K562 (cell line): ENCODE measurements at regions of chr10 and their contacts with region 1.

Region 1: GRCh38 chr10:72625608-72626443 is at the start of gene MICU1:
- DNase-seq: peak; percentile 99
- ATAC-seq: peak; percentile 98
- H3K4me3 ChIP-seq: peak within 1 kb of the TSS; percentile 87
- H3K27ac ChIP-seq: peak within 1 kb of the TSS; percentile 80
- H3K4me1 ChIP-seq: peaks cover 6 to 18% of the 10 kb centered on the region in 2 experiments; a peak in 3 of 5 replicates
- H3K27me3 ChIP-seq: no peaks in the 10 kb centered on the region
- CTCF ChIP-seq: 0 out of 6 replicates have a peak, but pooled peaks of 1 of the 3 experiments have one; percentile 11
- EP300 ChIP-seq: peak; percentile 43
- POLR2A ChIP-seq: peak; percentile 93
- RAD21 ChIP-seq: no peak; a peak in 1 of 4 replicates
- polyA plus RNA-seq, gene MICU1: 34.9 to 65.5 TPM

Region 2: DNA sequence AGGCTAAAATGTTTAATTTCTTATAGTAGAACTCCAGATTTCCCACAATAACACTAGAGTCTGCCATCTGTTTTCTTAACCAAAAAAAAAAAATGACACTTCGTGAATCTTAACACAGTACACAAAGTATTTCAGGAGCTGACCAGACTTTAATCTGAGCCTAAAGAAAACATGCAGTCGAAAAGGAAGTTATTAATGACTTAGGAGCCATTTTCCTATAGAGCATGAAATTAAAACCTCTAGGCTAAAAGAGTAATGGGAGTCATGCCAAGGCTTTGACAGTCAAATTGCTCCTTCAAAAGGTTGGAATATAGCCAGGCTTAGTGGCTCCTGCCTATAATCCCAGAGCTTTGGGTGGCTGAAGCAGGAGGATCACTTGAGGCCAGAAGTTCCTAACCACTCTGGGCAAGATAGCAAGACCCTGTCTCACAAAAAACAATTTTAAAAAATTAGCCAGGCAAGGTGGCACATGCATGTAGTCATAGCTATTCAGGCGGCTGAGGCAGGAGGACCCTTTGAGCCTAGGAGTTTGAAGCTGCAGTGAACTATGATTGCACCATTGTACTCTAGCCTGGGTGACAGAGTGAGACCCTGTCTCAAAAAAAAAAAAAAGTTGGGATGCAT is 13.5 kb before region 1 on chr10:
- CTCF ChIA-PET with region 1: no interaction called
- POLR2A ChIA-PET with region 1: interaction called, 32 read pairs
- in situ Hi-C with region 1: no loop called
- intact Hi-C with region 1: no loop called
- DNase-seq: no peak
- ATAC-seq: peak; percentile 12; the same call in 1 of the 3 replicates
- H3K4me3 ChIP-seq: no peak overlapping the region
- H3K27ac ChIP-seq: no peak overlapping the region
- H3K4me1 ChIP-seq: peaks cover 3 to 5% of the 10 kb centered on the region in 2 experiments; a peak in 1 of 5 replicates
- H3K27me3 ChIP-seq: no peaks in the 10 kb centered on the region
- CTCF ChIP-seq: no peak
- EP300 ChIP-seq: no peak
- POLR2A ChIP-seq: no peak
- RAD21 ChIP-seq: no peak

Region 3: GRCh38 chr10:72637398-72637857 is 11.6 kb after region 1 on chr10:
- CTCF ChIA-PET with region 1: no interaction called
- POLR2A ChIA-PET with region 1: interaction called, 13 read pairs
- in situ Hi-C with region 1: no loop called
- intact Hi-C with region 1: no loop called
- DNase-seq: peak; percentile 66 to 95 (median 83)
- ATAC-seq: peak; percentile 99
- H3K4me3 ChIP-seq: no peak overlapping the region
- H3K27ac ChIP-seq: peak overlapping the region; percentile 62
- H3K4me1 ChIP-seq: peaks cover 2 to 21% of the 10 kb centered on the region in 2 experiments; a peak in 3 of 5 replicates
- H3K27me3 ChIP-seq: no peaks in the 10 kb centered on the region
- CTCF ChIP-seq: no peak
- EP300 ChIP-seq: peak; percentile 85
- POLR2A ChIP-seq: no peak
- RAD21 ChIP-seq: peak; percentile 4 to 41; a peak in 1 of 4 replicates

Region 4: DNA sequence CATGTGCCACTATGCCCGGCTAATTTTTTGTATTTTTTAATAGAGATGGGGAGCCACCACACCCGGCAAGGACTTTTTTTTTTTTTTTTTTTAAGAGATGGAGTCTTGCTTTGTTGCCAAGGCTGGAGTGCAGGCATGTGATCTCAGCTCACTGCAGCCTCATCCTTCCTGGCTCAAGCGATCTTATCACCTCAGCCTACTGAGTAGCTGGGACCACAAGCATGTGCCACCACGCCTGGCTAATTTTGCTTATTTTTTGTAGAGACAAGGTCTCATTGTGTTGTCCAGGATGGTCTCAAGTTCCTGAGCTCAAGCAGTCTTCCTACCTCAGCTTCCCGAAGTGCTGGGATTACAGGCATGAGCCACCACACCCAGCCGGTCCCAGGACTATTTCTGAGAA is 56.8 kb after region 1 on chr10:
- CTCF ChIA-PET with region 1: interaction called, 3 read pairs
- POLR2A ChIA-PET with region 1: interaction called, 10 read pairs
- in situ Hi-C with region 1: no loop called
- intact Hi-C with region 1: no loop called
- DNase-seq: peak in 1 of 4 experiments; percentile 68
- ATAC-seq: peak; percentile 74
- H3K4me3 ChIP-seq: no peak overlapping the region
- H3K27ac ChIP-seq: no peak overlapping the region
- H3K4me1 ChIP-seq: peaks cover 12 to 15% of the 10 kb centered on the region in 2 experiments
- H3K27me3 ChIP-seq: no peaks in the 10 kb centered on the region
- CTCF ChIP-seq: no peak
- EP300 ChIP-seq: no peak
- POLR2A ChIP-seq: no peak
- RAD21 ChIP-seq: no peak

Region 5: DNA sequence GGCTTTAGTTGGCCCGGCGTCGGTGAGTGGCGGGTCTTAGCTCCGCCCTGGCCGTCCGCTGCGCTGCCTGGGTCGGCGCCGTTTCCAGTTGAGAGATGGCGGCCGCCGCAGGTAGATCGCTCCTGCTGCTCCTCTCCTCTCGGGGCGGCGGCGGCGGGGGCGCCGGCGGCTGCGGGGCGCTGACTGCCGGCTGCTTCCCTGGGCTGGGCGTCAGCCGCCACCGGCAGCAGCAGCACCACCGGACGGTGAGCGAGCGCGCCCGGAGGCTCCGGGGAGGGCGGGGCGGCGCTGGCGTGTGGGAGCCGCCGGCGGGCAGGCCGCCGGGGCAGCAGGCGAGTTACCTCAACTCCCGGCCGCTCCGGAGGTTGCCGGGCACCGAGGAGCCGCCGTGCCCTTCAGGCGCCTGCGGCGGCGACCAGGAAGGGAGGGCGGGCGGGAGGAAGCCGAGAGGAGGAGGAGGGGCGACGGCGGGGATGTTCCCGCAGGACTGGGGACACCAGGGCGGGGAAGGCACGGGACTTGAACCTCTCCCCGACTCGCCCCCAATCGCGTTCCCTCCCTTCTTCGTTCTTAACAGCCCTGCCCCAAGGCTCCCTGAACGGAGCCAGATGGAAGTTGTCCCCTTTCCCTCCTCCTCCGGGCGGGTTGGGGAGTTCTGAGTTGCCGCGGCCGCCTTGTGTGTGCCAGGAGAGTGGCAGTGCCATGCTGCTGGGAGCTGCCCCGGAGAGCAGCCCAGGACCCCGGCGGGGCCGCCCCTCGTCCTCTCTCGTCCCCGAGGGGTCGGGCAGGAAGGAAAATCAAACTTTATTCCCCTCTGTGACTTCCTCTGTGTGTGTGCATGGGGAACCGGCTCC is 66.5 kb after region 1 on chr10 and contains the start of gene MCU:
- CTCF ChIA-PET with region 1: no interaction called
- POLR2A ChIA-PET with region 1: interaction called, 6 read pairs
- in situ Hi-C with region 1: no loop called
- intact Hi-C with region 1: loop called (anchors 5 kb)
- DNase-seq: peak; percentile 95 to 98 (median 96)
- ATAC-seq: peak; percentile 98
- H3K4me3 ChIP-seq: peak within 1 kb of the TSS; percentile 71
- H3K27ac ChIP-seq: peak within 1 kb of the TSS; percentile 72
- H3K4me1 ChIP-seq: peaks cover 25 to 44% of the 10 kb centered on the region in 2 experiments
- H3K27me3 ChIP-seq: no peaks in the 10 kb centered on the region
- CTCF ChIP-seq: no peak
- EP300 ChIP-seq: no peak
- POLR2A ChIP-seq: peak; percentile 86
- RAD21 ChIP-seq: peak in 1 of 2 experiments; percentile 24; a peak in 1 of 4 replicates
- polyA plus RNA-seq, gene MCU: 8.2 to 11.1 TPM

Region 6: GRCh38 chr10:72834183-72834825 is 208.5 kb after region 1 on chr10:
- CTCF ChIA-PET with region 1: no interaction called
- POLR2A ChIA-PET with region 1: no interaction called
- in situ Hi-C with region 1: no loop called
- intact Hi-C with region 1: loop called (anchors 5 kb)
- DNase-seq: peak; percentile 17 to 78 (median 40)
- ATAC-seq: peak; percentile 85
- H3K4me3 ChIP-seq: no peak overlapping the region
- H3K27ac ChIP-seq: no peak overlapping the region
- H3K4me1 ChIP-seq: peaks cover 5 to 8% of the 10 kb centered on the region in 2 experiments; a peak in 4 of 5 replicates
- H3K27me3 ChIP-seq: no peaks in the 10 kb centered on the region
- CTCF ChIP-seq: peak; percentile 69 to 92 (median 74)
- EP300 ChIP-seq: no peak
- POLR2A ChIP-seq: no peak
- RAD21 ChIP-seq: peak; percentile 93 to 97

Region 7: DNA sequence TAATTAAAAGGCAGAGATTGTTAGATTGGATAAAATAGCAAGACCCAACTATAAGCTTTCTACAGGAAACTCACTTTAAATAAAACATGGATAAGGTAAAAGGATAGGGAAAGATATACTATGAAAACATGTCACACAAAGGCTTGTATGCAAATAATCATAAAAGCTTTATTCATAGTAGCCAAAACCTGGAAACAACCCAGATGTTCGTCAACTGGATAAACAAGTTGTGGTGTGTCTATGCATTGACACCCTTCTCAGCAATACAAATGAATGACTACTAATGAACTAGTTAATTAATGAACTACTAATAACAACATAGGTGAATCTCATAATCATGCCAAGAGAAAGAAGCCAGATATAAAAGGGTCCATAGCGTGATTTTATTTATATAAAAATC is 230.0 kb after region 1 on chr10:
- CTCF ChIA-PET with region 1: no interaction called
- POLR2A ChIA-PET with region 1: no interaction called
- in situ Hi-C with region 1: no loop called
- intact Hi-C with region 1: no loop called
- DNase-seq: no peak
- ATAC-seq: no peak
- H3K4me3 ChIP-seq: no peak overlapping the region
- H3K27ac ChIP-seq: no peak overlapping the region
- H3K4me1 ChIP-seq: no peaks in the 10 kb centered on the region
- H3K27me3 ChIP-seq: no peaks in the 10 kb centered on the region
- CTCF ChIP-seq: no peak
- EP300 ChIP-seq: no peak
- POLR2A ChIP-seq: no peak
- RAD21 ChIP-seq: no peak

Region 8: GRCh38 chr10:72889391-72889831 is 263.6 kb after region 1 on chr10:
- CTCF ChIA-PET with region 1: no interaction called
- POLR2A ChIA-PET with region 1: no interaction called
- in situ Hi-C with region 1: no loop called
- intact Hi-C with region 1: no loop called
- DNase-seq: no peak
- ATAC-seq: peak; percentile 34
- H3K4me3 ChIP-seq: no peak overlapping the region
- H3K27ac ChIP-seq: no peak overlapping the region
- H3K4me1 ChIP-seq: peaks cover 0 to 27% of the 10 kb centered on the region in 2 experiments; a peak in 3 of 5 replicates
- H3K27me3 ChIP-seq: no peaks in the 10 kb centered on the region
- CTCF ChIP-seq: no peak
- EP300 ChIP-seq: no peak
- POLR2A ChIP-seq: no peak; the same call in 1 of the 2 replicates
- RAD21 ChIP-seq: no peak